HEK293 (cell line): ENCODE measurements at regions of chr5 and their contacts with region 1.

Region 1: DNA sequence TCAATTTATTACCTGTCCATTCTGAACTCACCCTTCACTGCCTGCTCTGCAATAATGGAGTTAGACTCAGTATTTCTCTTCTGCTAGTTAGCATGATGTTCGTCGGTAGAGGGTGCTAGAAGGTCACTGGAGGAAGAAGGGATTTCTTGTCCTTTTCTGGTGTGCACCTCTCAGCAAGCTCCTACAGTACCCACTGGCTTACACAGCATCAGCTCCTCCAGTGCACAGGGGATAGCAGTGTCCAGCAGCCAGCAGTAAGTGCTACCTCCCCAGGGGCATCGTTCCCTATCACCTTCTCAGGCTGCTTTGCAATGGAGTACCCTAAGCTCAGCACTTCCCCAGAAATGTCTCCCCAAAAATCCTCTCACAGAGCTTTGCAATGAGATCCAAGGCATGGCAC is 45.9 kb upstream of the APC start:
- H3K4me3 ChIP-seq: no peak overlapping the region
- H3K27ac ChIP-seq: no peak overlapping the region
- H3K4me1 ChIP-seq: no peaks in the 10 kb centered on the region
- CTCF ChIP-seq: peak; percentile 47

Region 2: DNA sequence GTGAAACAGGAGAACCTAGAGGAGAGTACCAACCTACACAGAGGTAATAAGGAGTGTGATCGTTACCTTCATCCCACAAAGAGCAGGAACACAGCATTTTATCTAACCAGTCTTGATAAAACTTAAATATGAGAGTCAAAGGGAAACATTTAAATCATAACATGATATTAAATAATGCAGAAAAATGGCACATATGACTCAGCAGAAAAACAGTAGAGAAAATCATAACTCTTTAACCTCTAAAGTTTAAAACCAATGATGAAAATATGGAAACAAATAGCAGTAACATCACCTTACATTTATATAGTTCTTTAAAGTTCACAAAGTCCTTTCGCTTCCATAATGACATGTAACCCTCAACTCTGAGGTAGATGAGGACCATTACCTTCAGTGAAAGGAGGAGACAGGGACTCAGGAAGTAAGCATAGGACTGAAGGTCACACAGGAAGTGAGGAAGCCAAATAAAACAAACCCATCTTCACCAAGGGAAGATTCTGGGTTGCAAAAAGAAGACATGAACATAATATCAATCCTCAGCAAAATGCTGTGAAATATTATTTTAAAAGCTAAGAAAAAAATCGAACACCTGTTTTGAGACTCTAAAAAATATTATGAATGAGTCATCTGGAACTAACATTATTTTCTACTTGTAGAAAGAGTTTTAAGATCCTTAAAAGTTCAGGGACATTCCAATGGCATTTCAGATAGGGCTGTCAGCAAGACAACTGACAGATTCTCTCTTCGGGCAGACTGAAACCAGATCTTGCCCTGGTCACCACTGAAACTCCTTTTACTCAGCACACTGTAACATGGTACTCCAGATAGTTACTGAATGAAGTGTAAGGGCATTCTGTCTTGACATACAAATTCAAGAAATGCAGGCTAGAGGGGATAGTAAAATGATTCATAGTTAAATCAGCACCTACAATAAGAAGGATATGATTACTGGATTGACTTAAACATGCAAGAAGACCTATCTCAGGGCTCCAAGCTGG is 421.2 kb before region 1 on chr5:
- CTCF ChIA-PET with region 1: no interaction called
- POLR2A ChIA-PET with region 1: no interaction called
- H3K4me3 ChIP-seq: no peak overlapping the region
- H3K27ac ChIP-seq: no peak overlapping the region
- H3K4me1 ChIP-seq: no peaks in the 10 kb centered on the region; the same call in 1 of the 2 replicates
- CTCF ChIP-seq: no peak

Region 3: GRCh38 chr5:112445626-112446350 is 246.0 kb before region 1 on chr5:
- CTCF ChIA-PET with region 1: no interaction called
- POLR2A ChIA-PET with region 1: no interaction called
- H3K4me3 ChIP-seq: no peak overlapping the region
- H3K27ac ChIP-seq: no peak overlapping the region
- H3K4me1 ChIP-seq: no peaks in the 10 kb centered on the region
- CTCF ChIP-seq: no peak

Region 4: DNA sequence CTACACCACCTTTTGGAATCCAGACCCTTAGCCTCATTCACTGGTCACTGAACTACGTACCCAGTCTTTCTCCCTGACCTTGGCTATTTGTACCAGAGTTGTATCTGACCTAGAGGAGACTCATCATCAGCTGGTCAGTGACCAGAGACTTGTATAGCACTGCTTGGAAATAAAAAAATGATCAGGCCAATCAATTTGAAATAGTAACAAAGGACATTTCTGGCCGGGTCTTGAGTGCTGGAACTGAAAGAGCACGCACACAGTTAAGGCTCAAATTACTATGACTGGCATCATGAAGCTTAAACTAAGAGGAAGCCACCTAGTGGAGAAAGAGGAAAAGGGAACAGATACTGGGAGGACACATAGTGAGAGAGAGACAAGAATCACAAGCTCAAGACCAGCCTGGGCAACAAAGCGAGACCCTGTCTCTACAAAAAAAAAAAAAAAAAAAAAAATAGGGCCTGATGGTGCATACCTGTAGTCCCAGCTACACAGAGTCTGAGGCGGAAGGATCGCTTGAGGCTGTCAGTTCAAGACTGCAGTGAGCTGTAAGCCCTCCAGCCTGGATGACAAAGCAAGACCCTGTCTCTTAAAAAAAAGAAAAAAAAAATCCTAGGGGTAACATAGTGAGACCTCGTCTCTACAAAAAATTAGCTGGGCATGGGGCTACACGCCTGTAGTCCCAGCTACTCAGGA is 156.5 kb after region 1 on chr5:
- CTCF ChIA-PET with region 1: interaction called, 26 read pairs
- POLR2A ChIA-PET with region 1: no interaction called
- H3K4me3 ChIP-seq: no peak overlapping the region
- H3K27ac ChIP-seq: no peak overlapping the region
- H3K4me1 ChIP-seq: no peaks in the 10 kb centered on the region; the same call in 1 of the 2 replicates
- CTCF ChIP-seq: peak; percentile 46; the same call in 1 of the 2 replicates